ENCODE measurements at regions of chr14 and their contacts with region 1.

Region 1: GRCh38 chr14:90235179-90235976 is 21.0 kb upstream of the PSMC1 start:
- DNase-seq: peak; percentile 75
- ATAC-seq: peak; percentile 69
- H3K4me3 Mint-ChIP-seq: no peak overlapping the region
- H3K27ac Mint-ChIP-seq: no peak overlapping the region
- H3K4me1 Mint-ChIP-seq: peaks cover 2% of the 10 kb centered on the region
- H3K27me3 Mint-ChIP-seq: peaks cover 8% of the 10 kb centered on the region

Region 2: GRCh38 chr14:89954070-89955028 is 281.0 kb before region 1 on chr14 and contains the start of gene EFCAB11:
- CTCF ChIA-PET with region 1: interaction called, 10 read pairs
- DNase-seq: peak; percentile 98
- ATAC-seq: peak; percentile 85
- H3K4me3 Mint-ChIP-seq: peak within 1 kb of the TSS; percentile 93
- H3K27ac Mint-ChIP-seq: peak within 1 kb of the TSS; percentile 90
- H3K4me1 Mint-ChIP-seq: peaks cover 43% of the 10 kb centered on the region
- H3K27me3 Mint-ChIP-seq: no peaks in the 10 kb centered on the region
- total RNA-seq, gene EFCAB11: 11.3 to 12.4 TPM

Region 3: GRCh38 chr14:90159146-90159545 is 76.2 kb before region 1 on chr14:
- CTCF ChIA-PET with region 1: no interaction called
- DNase-seq: no peak
- ATAC-seq: no peak
- H3K4me3 Mint-ChIP-seq: no peak overlapping the region
- H3K27ac Mint-ChIP-seq: no peak overlapping the region
- H3K4me1 Mint-ChIP-seq: no peaks in the 10 kb centered on the region
- H3K27me3 Mint-ChIP-seq: peaks cover 30% of the 10 kb centered on the region

Region 4: DNA sequence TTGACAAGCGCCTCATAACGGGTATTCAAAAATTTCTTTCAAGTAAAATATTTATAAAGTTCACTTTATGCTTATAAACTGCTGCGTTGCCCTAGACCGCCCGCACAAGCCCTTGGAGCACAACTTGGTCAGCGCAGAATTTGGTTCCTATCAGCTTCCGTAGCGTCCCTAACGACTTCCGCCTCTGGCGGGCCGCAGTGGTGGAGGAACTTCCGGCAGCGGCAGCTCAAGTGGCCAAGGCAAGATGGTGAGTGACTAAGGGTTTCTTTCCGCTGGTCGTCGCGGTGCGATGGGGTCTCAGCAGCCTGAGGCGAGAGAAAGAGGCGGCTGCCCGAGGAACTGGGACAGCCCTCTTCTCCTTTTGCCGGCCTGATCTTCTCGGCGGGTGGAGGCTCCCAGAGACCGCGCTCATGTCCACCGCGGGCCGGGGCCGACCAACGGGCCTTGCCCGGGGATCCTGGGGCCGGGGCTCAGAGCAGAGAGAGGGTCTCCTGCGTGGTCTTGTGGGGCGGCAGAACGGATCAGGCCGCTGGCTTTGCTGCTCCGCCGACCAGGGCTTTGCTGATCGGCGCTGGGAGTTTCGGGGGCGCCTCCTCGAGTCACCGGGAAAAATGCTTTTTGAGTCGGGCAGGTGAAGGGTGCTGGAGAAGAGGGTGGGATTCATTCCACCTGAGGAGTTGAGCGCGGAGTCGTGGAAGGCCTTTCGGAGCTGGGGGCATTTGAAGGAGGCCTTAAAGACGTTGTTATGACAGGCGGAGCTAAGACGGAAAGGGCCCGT is 21.2 kb after region 1 on chr14 and contains the start of gene PSMC1:
- CTCF ChIA-PET with region 1: interaction called, 16 read pairs
- DNase-seq: peak; percentile 94
- ATAC-seq: peak; percentile 97
- H3K4me3 Mint-ChIP-seq: peak within 1 kb of the TSS; percentile 96
- H3K27ac Mint-ChIP-seq: peak within 1 kb of the TSS; percentile 97
- H3K4me1 Mint-ChIP-seq: peaks cover 30% of the 10 kb centered on the region
- H3K27me3 Mint-ChIP-seq: peaks cover 16% of the 10 kb centered on the region
- total RNA-seq, gene PSMC1: 93.1 to 120 TPM